A673 (cell line): ENCODE measurements at regions of chr13 and their contacts with region 1.

Region 1: GRCh38 chr13:80363890-80364503 is 23.1 kb upstream of the SPRY2 start:
- DNase-seq: peak; percentile 58
- H3K4me3 ChIP-seq: no peak overlapping the region
- H3K27ac ChIP-seq: no peak overlapping the region
- H3K4me1 ChIP-seq: peaks cover 45% of the 10 kb centered on the region
- H3K27me3 ChIP-seq: no peaks in the 10 kb centered on the region
- CTCF ChIP-seq: peak; percentile 88

Region 2: DNA sequence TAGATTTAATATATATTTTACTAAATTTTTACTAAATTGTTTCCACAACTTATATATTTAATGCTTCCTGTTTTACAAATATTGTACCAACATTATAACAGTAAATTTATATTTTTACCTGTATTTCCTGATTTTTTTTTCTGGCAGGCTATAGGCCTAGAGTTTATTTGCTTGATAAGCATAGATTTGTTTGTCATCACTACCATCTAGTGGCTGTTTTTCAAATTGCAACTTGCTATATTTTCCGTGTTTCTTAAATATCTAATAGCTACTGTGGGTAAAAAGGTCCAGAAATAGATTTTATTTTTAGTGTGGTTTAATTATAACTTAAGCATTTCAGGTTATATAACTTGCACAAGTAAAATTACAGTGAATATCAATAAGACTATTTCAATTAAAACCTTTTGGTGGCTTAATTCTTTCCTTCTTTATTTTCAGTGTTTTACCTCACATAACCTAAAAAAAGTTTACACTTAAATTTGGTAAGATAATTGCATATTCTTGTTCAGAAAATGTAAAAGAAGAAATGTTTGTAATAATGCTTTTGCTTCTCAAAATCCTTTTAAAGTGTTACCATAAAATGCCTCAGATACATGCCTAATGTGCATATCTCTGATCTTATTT is 822.5 kb before region 1 on chr13:
- CTCF ChIA-PET with region 1: no interaction called
- POLR2A ChIA-PET with region 1: no interaction called
- intact Hi-C with region 1: loop called (anchors 10 kb)
- DNase-seq: peak; percentile 73
- H3K4me3 ChIP-seq: no peak overlapping the region
- H3K27ac ChIP-seq: no peak overlapping the region
- H3K4me1 ChIP-seq: no peaks in the 10 kb centered on the region
- H3K27me3 ChIP-seq: no peaks in the 10 kb centered on the region
- CTCF ChIP-seq: peak; percentile 80

Region 3: DNA sequence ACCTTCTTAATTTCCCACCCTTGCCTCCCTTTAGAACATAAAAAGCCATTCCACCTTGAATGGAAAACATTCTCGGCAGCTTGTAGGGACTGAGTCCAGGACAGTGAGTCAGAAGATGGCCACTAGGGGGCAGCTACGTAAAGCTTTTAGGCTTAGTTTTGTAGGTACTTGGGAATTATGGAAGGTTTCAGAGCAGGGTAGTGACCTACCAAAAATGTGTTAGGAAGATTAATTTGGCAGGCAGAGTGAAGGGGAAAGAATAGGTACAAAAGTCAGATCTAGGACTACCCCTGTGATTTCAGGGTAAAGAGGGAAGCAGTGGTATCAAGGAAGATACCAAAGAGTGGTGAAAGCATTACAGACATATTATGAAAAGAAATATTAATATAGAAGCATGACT is 684.7 kb before region 1 on chr13:
- CTCF ChIA-PET with region 1: interaction called, 3 read pairs
- POLR2A ChIA-PET with region 1: no interaction called
- intact Hi-C with region 1: loop called (anchors 1 kb)
- DNase-seq: peak; percentile 80
- H3K4me3 ChIP-seq: no peak overlapping the region
- H3K27ac ChIP-seq: no peak overlapping the region
- H3K4me1 ChIP-seq: no peaks in the 10 kb centered on the region
- H3K27me3 ChIP-seq: no peaks in the 10 kb centered on the region
- CTCF ChIP-seq: peak; percentile 93

Region 4: GRCh38 chr13:79775830-79776229 is 588.2 kb before region 1 on chr13:
- CTCF ChIA-PET with region 1: no interaction called
- POLR2A ChIA-PET with region 1: no interaction called
- intact Hi-C with region 1: loop called (anchors 5 kb)
- DNase-seq: peak; percentile 79
- H3K4me3 ChIP-seq: no peak overlapping the region
- H3K27ac ChIP-seq: no peak overlapping the region
- H3K4me1 ChIP-seq: peaks cover 22% of the 10 kb centered on the region
- H3K27me3 ChIP-seq: no peaks in the 10 kb centered on the region
- CTCF ChIP-seq: peak; percentile 83

Region 5: GRCh38 chr13:79901336-79901735 is 462.7 kb before region 1 on chr13:
- CTCF ChIA-PET with region 1: no interaction called
- POLR2A ChIA-PET with region 1: no interaction called
- intact Hi-C with region 1: loop called (anchors 2 kb)
- DNase-seq: peak; percentile 93
- H3K4me3 ChIP-seq: no peak overlapping the region
- H3K27ac ChIP-seq: no peak overlapping the region
- H3K4me1 ChIP-seq: peaks cover 33% of the 10 kb centered on the region
- H3K27me3 ChIP-seq: no peaks in the 10 kb centered on the region
- CTCF ChIP-seq: peak; percentile 58

Region 6: DNA sequence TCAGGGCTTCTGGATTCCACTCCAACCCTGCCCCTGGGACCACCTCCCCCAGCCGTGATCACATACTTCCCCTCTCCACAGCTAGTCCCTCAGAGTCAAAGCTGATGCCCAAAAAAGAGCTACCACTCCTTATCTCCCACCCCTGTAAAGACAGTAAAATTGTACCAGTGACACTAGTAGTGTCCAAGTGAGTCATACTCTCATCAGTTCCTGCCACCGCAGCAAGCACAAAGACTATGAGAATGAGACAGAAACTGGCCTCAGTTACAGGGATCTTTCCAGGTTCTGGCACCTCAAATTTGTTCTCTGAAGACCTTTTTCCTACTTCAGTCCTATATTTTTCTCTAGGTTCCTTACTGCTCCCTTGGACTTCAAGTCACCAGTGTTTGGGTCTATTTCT is 167.2 kb before region 1 on chr13:
- CTCF ChIA-PET with region 1: interaction called, 10 read pairs
- POLR2A ChIA-PET with region 1: no interaction called
- intact Hi-C with region 1: no loop called
- DNase-seq: no peak
- H3K4me3 ChIP-seq: no peak overlapping the region
- H3K27ac ChIP-seq: no peak overlapping the region
- H3K4me1 ChIP-seq: peaks cover 8% of the 10 kb centered on the region
- H3K27me3 ChIP-seq: no peaks in the 10 kb centered on the region
- CTCF ChIP-seq: no peak

Region 7: DNA sequence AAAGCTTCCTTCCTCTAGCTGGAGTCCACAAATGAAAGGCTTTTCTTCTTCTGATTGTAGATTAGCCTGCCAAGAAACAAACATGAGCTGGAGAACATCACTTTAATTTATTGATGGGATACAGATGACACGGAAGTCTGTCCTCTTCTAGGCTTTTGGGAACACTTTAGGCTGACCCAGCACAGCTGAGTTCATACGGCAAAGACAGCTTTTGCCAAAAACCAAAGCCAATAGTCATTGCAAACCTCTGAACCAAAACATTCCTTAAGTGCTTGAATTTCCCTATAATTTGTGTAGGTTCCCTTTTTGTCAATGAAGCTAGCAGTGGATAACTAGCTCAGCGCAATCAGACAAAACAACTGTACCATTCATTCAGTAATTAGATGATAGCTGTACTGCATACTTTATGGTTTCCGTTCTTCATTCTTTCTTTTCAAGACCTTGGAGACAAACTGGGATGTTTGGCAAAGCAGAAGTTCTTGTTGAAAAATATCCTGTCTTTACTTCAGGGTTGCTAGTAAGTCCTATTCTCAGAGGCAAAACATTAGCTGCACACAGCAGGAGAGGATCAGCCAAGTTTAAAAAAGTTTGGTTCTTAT is 72.7 kb after region 1 on chr13:
- CTCF ChIA-PET with region 1: no interaction called
- POLR2A ChIA-PET with region 1: no interaction called
- intact Hi-C with region 1: loop called (anchors 5 kb)
- DNase-seq: peak; percentile 98
- H3K4me3 ChIP-seq: no peak overlapping the region
- H3K27ac ChIP-seq: peak overlapping the region; percentile 21
- H3K4me1 ChIP-seq: peaks cover 29% of the 10 kb centered on the region
- H3K27me3 ChIP-seq: peaks cover 20% of the 10 kb centered on the region
- CTCF ChIP-seq: no peak

Region 8: GRCh38 chr13:80802946-80803345 is 438.9 kb after region 1 on chr13:
- CTCF ChIA-PET with region 1: no interaction called
- POLR2A ChIA-PET with region 1: no interaction called
- intact Hi-C with region 1: no loop called
- DNase-seq: no peak
- H3K4me3 ChIP-seq: no peak overlapping the region
- H3K27ac ChIP-seq: no peak overlapping the region
- H3K4me1 ChIP-seq: no peaks in the 10 kb centered on the region
- H3K27me3 ChIP-seq: no peaks in the 10 kb centered on the region
- CTCF ChIP-seq: no peak